ENCODE measurements at regions of chr1 and their contacts with region 1.

Region 1: GRCh38 chr1:38046884-38047602 is 450 bp upstream of the POU3F1 start:
- DNase-seq: peak; percentile 63
- H3K4me3 ChIP-seq: peak overlapping the region; percentile 55
- H3K27ac ChIP-seq: no peak overlapping the region
- H3K27me3 ChIP-seq: peaks cover 47% of the 10 kb centered on the region
- CTCF ChIP-seq: no peak

Region 2: DNA sequence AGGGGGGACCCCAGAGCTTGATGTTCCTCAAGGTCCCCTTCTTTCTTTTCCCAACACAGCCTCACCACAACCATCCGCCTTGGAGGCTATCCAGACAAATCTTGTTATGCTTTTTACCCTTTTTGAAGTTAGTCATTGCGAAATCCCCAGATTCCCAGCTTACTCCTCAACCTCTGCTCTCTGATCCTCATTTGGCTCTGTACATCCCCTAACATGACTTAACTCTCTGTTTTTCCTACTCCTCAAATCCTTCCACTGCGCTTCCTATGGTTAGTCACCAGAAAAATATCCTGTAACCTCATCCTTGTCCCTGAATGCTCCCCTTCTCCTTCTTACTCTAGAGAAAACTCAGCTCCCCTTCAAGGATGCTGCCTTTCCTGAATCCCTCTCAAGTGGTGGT is 188.7 kb after region 1 on chr1:
- in situ Hi-C with region 1: no loop called
- DNase-seq: peak; percentile 24
- H3K4me3 ChIP-seq: no peak overlapping the region
- H3K27ac ChIP-seq: no peak overlapping the region
- H3K27me3 ChIP-seq: no peaks in the 10 kb centered on the region
- CTCF ChIP-seq: no peak

Region 3: DNA sequence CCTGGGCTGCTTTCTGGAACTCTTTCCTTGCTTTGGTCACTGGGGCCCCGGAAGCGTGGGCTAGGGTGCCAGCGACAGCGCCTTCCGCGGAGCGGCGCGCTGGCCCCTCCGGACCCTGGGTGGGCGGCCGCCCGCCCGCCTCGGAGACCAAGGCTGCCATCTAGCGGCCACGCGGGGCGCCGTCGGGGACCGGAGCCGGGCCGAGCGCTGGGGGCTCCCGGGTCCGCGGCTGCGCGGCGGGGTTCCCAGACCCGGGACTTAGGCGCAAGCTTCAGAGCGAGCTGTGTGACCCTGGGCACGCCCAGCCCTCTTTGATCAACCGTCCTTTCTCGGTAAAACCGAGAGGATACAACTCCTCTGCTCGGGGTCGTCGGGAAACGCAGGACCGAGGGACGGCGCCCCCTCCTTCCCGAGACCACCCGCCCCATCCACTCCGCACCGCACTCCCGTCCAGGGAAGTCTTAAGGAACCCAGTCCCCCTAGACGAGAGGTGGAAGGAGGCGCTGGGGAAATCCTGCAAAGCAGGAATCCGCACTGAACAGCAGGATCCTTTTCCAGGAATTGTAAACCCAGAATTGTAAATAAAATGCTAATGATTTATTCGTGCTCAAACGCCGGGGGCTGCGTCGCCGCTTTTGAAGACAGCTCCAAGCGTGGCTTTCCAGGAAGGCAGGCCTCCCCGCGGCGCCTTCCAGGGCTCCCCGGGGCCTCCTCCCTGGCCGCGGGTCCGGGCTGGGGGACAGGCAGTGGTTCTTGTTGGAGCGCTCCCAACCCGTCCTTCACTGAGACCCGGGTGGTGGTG is 771.3 kb after region 1 on chr1:
- in situ Hi-C with region 1: loop called (anchors 25 kb)
- DNase-seq: no peak
- H3K4me3 ChIP-seq: peak overlapping the region; percentile 24
- H3K27ac ChIP-seq: no peak overlapping the region
- H3K27me3 ChIP-seq: peaks cover 60% of the 10 kb centered on the region
- CTCF ChIP-seq: peak; percentile 37

Measured in brain microvascular endothelial cell (primary cell).